K562 (cell line): ENCODE measurements at regions of chr14 and their contacts with region 1.

Region 1: DNA sequence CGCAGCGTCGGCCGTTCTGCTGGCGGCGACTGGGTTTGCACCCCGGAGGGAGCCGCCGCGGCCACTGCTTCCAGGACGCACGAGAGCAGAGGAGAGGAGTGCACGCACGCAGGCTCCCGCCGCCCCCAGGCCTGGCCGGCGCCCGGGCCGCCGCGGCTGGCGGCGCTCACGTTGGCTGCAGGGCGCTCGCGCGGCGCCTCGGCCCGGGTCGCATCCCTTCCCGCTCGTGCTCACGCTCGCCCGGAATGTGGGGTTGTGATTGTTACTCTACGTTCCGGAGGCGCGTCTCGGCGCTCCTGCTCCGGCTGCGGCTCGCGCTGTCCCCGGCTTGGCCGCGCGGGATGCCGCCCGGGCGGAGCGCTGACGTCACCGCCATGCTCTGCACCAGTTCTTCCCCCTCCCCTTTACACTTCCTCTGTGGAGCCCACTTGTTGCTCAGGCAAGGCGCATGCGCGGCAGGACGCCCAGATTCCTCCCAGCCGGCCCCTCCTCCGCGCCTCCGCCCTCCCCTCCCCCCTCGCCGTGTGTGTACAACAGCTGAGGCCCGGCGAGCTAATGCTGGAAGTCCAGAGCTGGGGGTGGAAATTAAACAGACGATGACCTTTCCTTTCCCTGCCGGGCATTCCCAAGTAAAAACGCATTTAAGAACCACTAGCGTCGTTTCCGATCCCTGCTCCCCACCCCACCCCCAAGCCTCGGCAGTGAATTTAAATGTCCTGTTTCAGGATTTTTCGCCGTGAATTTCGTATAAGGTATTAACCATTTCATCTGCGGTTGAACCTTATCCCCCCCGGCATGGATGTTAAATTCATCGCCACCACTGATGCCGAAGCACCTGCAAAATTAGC is at the start of gene IRF2BPL:
- DNase-seq: peak; percentile 91 to 96 (median 94)
- ATAC-seq: peak; percentile 80
- H3K4me3 ChIP-seq: peak within 1 kb of the TSS; percentile 65
- H3K27ac ChIP-seq: peak within 1 kb of the TSS; percentile 95
- H3K4me1 ChIP-seq: peaks cover 16 to 62% of the 10 kb centered on the region in 2 experiments; a peak in 4 of 5 replicates
- H3K27me3 ChIP-seq: no peaks in the 10 kb centered on the region
- CTCF ChIP-seq: no peak
- EP300 ChIP-seq: no peak
- POLR2A ChIP-seq: no peak; the same call in 1 of the 2 replicates
- RAD21 ChIP-seq: 0 out of 4 replicates have a peak, but pooled peaks of 1 of the 2 experiments have one; percentile 6
- polyA plus RNA-seq, gene IRF2BPL: 0.52 to 0.75 TPM

Region 2: DNA sequence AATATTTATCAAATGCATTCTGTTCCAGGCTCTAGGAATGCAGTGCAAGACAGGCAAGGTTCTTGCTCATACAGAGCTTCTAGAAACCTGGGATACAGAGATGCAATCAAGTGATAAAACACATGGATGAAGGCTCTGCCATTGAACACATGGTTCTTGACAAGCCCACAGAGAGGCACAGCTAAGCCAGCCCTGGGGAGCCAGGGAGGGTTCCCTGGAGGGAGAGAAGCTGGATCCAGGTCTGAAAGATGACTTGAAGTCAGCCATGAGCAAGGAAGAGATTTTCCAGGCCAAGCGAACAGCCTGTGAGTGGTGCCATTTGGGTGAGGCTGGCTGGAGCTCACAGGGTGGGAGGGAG is 66.3 kb before region 1 on chr14:
- CTCF ChIA-PET with region 1: no interaction called
- POLR2A ChIA-PET with region 1: interaction called, 4 read pairs
- in situ Hi-C with region 1: no loop called
- intact Hi-C with region 1: loop called (anchors 5 kb)
- DNase-seq: peak in 1 of 4 experiments; percentile 17
- ATAC-seq: no peak
- H3K4me3 ChIP-seq: peak overlapping the region; percentile 23; the same call in 1 of the 2 replicates
- H3K27ac ChIP-seq: peak overlapping the region; percentile 94
- H3K4me1 ChIP-seq: peaks cover 44 to 47% of the 10 kb centered on the region in 2 experiments
- H3K27me3 ChIP-seq: no peaks in the 10 kb centered on the region
- CTCF ChIP-seq: no peak
- EP300 ChIP-seq: no peak
- POLR2A ChIP-seq: no peak
- RAD21 ChIP-seq: no peak